A549 (cell line): ENCODE measurements at regions of chr17 and their contacts with region 1.

Region 1: DNA sequence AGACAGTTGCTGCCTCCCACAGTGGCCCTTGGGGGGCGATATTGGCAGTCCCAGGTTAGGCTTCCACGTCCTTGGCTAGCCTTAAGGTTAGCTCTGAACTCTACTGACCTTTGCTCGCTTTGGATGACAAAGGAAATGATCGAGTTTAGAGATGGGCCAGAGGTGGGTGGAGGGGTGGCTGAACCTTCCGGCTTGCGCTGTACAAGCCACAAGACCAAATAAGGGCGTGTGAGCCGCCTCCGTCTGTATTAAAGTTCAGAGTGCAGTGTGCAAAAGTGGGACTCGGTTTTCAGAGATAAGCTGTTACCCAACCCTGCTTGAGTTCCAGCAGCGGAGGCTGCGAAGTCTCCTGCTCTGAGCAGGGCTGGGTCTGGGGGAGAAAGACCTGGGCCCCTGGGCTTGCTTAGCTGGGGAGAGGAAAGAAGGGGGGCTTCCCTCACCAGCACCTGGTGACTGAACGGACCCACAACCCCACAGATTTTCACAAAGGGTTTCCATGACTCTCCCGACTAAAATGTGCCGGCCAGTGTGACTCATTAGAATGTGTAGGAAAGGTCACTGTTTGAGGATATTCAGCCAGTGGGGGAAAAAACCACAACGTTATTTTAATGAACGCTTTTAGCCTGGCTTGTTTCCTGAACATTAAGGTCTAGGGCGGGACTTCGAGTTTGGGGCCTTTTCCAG is 67.2 kb downstream of the CENPV start:
- DNase-seq: peak; percentile 99
- ATAC-seq: peak; percentile 88 to 92
- H3K4me3 ChIP-seq: no peak overlapping the region
- H3K27ac ChIP-seq: peak overlapping the region; percentile 96 to 97
- H3K4me1 ChIP-seq: peaks cover 78% of the 10 kb centered on the region
- CTCF ChIP-seq: peak; percentile 88; the same call in 2 of the 3 replicates
- EP300 ChIP-seq: peak; percentile 28 to 79; a peak in 2 of 5 replicates
- POLR2A ChIP-seq: peak; percentile 18; the same call in 1 of the 2 replicates
- RAD21 ChIP-seq: peak; percentile 88 to 89

Region 2: GRCh38 chr17:16222406-16222805 is 63.7 kb before region 1 on chr17:
- CTCF ChIA-PET with region 1: interaction called, 69 read pairs
- POLR2A ChIA-PET with region 1: interaction called, 57 read pairs
- DNase-seq: no peak
- ATAC-seq: no peak
- H3K4me3 ChIP-seq: no peak overlapping the region
- H3K27ac ChIP-seq: peak overlapping the region in 1 of 2 experiments; percentile 56; a peak in 3 of 6 replicates
- H3K4me1 ChIP-seq: peaks cover 19% of the 10 kb centered on the region
- CTCF ChIP-seq: no peak
- EP300 ChIP-seq: no peak
- POLR2A ChIP-seq: no peak
- RAD21 ChIP-seq: no peak

Region 3: GRCh38 chr17:16267174-16267573 is 18.9 kb before region 1 on chr17:
- CTCF ChIA-PET with region 1: interaction called, 30 read pairs
- POLR2A ChIA-PET with region 1: interaction called, 4 read pairs
- DNase-seq: no peak
- ATAC-seq: no peak
- H3K4me3 ChIP-seq: no peak overlapping the region
- H3K27ac ChIP-seq: no peak overlapping the region
- H3K4me1 ChIP-seq: peaks cover 5% of the 10 kb centered on the region; the same call in 1 of the 3 replicates
- CTCF ChIP-seq: no peak
- EP300 ChIP-seq: no peak
- POLR2A ChIP-seq: no peak
- RAD21 ChIP-seq: no peak

Region 4: GRCh38 chr17:16304830-16305229 is 18.7 kb after region 1 on chr17:
- CTCF ChIA-PET with region 1: interaction called, 104 read pairs
- POLR2A ChIA-PET with region 1: interaction called, 14 read pairs
- DNase-seq: peak in 1 of 2 experiments; percentile 78
- ATAC-seq: peak; percentile 93 to 95
- H3K4me3 ChIP-seq: no peak overlapping the region
- H3K27ac ChIP-seq: peak overlapping the region; percentile 20 to 58; a peak in 4 of 6 replicates
- H3K4me1 ChIP-seq: peaks cover 18% of the 10 kb centered on the region
- CTCF ChIP-seq: peak; percentile 72
- EP300 ChIP-seq: no peak
- POLR2A ChIP-seq: no peak
- RAD21 ChIP-seq: peak; percentile 80 to 83

Region 5: DNA sequence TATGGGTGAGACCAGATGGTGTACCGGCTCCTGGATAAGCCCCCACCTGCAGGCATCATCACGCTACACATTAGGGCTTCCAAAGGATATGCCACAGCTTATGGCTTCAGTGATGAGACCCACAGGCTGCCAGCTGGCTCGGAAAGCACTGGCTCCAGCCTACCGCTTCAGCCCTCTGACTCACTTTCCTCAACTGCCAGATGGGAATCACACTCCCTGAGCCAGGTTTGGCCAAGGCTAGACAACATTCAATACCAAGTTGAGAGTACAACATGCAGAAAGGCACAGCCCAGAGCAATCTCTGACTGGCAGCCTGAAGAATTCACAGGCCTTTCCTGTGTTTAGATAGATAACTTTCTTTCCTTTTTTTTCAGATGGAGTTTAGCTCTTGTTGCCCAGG is 56.9 kb after region 1 on chr17:
- CTCF ChIA-PET with region 1: interaction called, 13 read pairs
- POLR2A ChIA-PET with region 1: interaction called, 8 read pairs
- DNase-seq: no peak
- ATAC-seq: no peak
- H3K4me3 ChIP-seq: no peak overlapping the region
- H3K27ac ChIP-seq: no peak overlapping the region
- H3K4me1 ChIP-seq: peaks cover 13% of the 10 kb centered on the region
- CTCF ChIP-seq: no peak
- EP300 ChIP-seq: no peak
- POLR2A ChIP-seq: no peak
- RAD21 ChIP-seq: no peak

Region 6: DNA sequence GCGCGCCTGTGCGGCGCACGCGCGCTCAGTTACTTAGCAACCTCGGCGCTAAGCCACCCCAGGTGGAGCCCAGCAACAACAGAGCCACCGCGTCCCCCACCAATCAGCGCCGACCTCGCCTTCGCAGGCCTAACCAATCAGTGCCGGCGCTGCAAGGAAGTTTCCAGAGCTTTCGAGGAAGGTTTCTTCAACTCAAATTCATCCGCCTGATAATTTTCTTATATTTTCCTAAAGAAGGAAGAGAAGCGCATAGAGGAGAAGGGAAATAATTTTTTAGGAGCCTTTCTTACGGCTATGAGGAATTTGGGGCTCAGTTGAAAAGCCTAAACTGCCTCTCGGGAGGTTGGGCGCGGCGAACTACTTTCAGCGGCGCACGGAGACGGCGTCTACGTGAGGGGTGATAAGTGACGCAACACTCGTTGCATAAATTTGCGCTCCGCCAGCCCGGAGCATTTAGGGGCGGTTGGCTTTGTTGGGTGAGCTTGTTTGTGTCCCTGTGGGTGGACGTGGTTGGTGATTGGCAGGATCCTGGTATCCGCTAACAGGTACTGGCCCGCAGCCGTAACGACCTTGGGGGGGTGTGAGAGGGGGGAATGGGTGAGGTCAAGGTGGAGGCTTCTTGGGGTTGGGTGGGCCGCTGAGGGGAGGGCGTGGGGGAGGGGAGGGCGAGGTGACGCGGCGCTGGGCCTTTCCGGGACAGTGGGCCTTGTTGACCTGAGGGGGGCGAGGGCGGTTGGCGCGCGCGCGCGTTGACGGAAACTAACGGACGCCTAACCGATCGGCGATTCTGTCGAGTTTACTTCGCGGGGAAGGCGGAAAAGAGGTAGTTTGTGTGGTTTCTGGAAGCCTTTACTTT is 94.8 kb after region 1 on chr17 and contains the start of gene UBB:
- CTCF ChIA-PET with region 1: interaction called, 7 read pairs
- POLR2A ChIA-PET with region 1: interaction called, 27 read pairs
- DNase-seq: peak; percentile 92 to 100
- ATAC-seq: peak; percentile 93
- H3K4me3 ChIP-seq: peak within 1 kb of the TSS; percentile 88
- H3K27ac ChIP-seq: peak within 1 kb of the TSS; percentile 91 to 95
- H3K4me1 ChIP-seq: peaks cover 43% of the 10 kb centered on the region
- CTCF ChIP-seq: no peak
- EP300 ChIP-seq: peak; percentile 12 to 56; a peak in 2 of 5 replicates
- POLR2A ChIP-seq: peak; percentile 100
- RAD21 ChIP-seq: no peak
- polyA plus RNA-seq, gene UBB: 2,851 and 4,311 TPM in 2 replicates

Region 7: DNA sequence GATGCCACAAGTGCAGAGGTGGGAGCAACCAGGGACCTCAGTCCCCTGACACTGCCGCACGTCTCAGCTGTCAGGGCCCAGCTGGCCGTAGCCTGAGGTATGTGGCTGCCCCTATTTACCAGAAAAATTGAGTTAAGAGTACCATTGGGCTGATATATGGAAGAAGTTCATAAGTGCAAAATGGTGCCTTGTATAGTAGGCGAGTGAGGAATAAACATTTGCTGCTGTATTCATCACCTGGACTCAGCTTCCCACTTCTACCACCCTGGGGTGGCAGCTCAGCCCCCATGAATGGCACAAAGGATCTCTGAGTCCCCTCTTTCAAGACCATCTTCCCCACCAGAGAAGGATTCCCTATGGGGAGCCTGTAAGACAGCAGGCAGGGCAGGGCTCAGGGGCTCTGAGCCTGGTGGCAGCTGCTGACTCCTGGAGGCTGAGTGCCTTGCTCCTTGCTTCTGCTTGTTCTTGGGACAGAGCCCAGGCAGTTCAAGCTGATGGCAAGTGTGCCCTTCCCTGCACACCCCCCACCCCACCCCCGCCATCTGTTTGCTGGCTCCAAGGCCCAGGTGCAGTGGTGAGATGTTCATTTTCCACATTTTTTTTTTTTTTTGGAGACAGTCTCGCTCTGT is 158.3 kb after region 1 on chr17:
- CTCF ChIA-PET with region 1: interaction called, 7 read pairs
- POLR2A ChIA-PET with region 1: interaction called, 29 read pairs
- DNase-seq: peak in 1 of 2 experiments; percentile 37
- ATAC-seq: peak; percentile 19 to 28; a peak in 4 of 6 replicates
- H3K4me3 ChIP-seq: no peak overlapping the region
- H3K27ac ChIP-seq: peak overlapping the region in 1 of 2 experiments; percentile 99; a peak in 3 of 6 replicates
- H3K4me1 ChIP-seq: peaks cover 48% of the 10 kb centered on the region
- CTCF ChIP-seq: no peak
- EP300 ChIP-seq: no peak
- POLR2A ChIP-seq: no peak
- RAD21 ChIP-seq: no peak